Dendritic cell treated with granulocyte-macrophage colony-stimulating factor and Interleukin-4, amounts not matched to agents 40 ng/mL and 50 ng/mL, for 4 days (primary cell): ENCODE measurements at regions of chr11 and their contacts with region 1.

Region 1: GRCh38 chr11:59615637-59616395 is at the start of gene OSBP:
- H3K4me3 Mint-ChIP-seq: peak within 1 kb of the TSS; percentile 89
- H3K27ac Mint-ChIP-seq: peak within 1 kb of the TSS; percentile 98
- H3K4me1 Mint-ChIP-seq: peaks cover 40% of the 10 kb centered on the region
- H3K27me3 Mint-ChIP-seq: no peaks in the 10 kb centered on the region

Region 2: GRCh38 chr11:59560702-59561469 is 54.9 kb before region 1 on chr11:
- intact Hi-C with region 1: loop called (anchors 5 kb)
- H3K4me3 Mint-ChIP-seq: peak overlapping the region; percentile 77
- H3K27ac Mint-ChIP-seq: peak overlapping the region; percentile 64
- H3K4me1 Mint-ChIP-seq: peaks cover 51% of the 10 kb centered on the region
- H3K27me3 Mint-ChIP-seq: peaks cover 23% of the 10 kb centered on the region

Region 3: GRCh38 chr11:59573234-59573633 is 42.6 kb before region 1 on chr11:
- intact Hi-C with region 1: loop called (anchors 5 kb)
- H3K4me3 Mint-ChIP-seq: no peak overlapping the region
- H3K27ac Mint-ChIP-seq: no peak overlapping the region
- H3K4me1 Mint-ChIP-seq: no peaks in the 10 kb centered on the region
- H3K27me3 Mint-ChIP-seq: no peaks in the 10 kb centered on the region

Region 4: GRCh38 chr11:59668950-59669610 is 53.3 kb after region 1 on chr11 and contains the start of gene PATL1:
- intact Hi-C with region 1: loop called (anchors 1 kb)
- H3K4me3 Mint-ChIP-seq: peak within 1 kb of the TSS; percentile 90
- H3K27ac Mint-ChIP-seq: peak within 1 kb of the TSS; percentile 100
- H3K4me1 Mint-ChIP-seq: peaks cover 39% of the 10 kb centered on the region
- H3K27me3 Mint-ChIP-seq: no peaks in the 10 kb centered on the region

Region 5: DNA sequence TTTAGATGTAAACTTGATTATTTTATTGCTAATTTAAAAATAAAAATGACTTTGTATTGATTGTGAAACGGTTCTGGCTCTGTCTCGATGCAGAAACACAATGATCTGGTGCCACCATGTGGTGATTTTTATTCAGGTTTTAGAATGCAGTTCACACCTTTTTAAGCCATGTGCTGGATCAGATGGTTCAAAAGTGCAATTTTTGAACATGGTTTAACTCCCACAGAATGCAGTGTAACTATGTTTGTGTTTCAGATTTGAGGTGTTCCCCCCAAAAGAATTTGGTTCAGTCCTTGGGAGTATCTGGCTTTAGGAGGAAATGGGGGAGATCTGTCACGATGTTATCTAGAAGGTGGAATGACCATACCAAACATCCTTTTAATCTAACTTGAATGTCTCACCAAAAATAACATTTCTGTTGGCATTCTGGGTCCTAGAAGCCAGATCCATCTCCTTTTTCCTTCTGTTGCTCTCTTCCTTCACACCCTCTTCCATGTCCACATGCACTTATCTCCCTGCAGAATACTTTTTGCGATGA is 186.9 kb after region 1 on chr11:
- intact Hi-C with region 1: loop called (anchors 10 kb)
- H3K4me3 Mint-ChIP-seq: no peak overlapping the region
- H3K27ac Mint-ChIP-seq: no peak overlapping the region
- H3K4me1 Mint-ChIP-seq: peaks cover 4% of the 10 kb centered on the region
- H3K27me3 Mint-ChIP-seq: no peaks in the 10 kb centered on the region